ENCODE measurements at regions of chr17 and their contacts with region 1.

Region 1: GRCh38 chr17:30074730-30075129 is 41.9 kb upstream of the NSRP1 start:
- DNase-seq: peak; percentile 21
- ATAC-seq: no peak
- H3K4me3 ChIP-seq: no peak overlapping the region
- H3K27ac ChIP-seq: no peak overlapping the region
- H3K4me1 ChIP-seq: no peaks in the 10 kb centered on the region
- H3K27me3 ChIP-seq: peaks cover 33% of the 10 kb centered on the region
- CTCF ChIP-seq: no peak
- POLR2A ChIP-seq: no peak
- RAD21 ChIP-seq: no peak

Region 2: DNA sequence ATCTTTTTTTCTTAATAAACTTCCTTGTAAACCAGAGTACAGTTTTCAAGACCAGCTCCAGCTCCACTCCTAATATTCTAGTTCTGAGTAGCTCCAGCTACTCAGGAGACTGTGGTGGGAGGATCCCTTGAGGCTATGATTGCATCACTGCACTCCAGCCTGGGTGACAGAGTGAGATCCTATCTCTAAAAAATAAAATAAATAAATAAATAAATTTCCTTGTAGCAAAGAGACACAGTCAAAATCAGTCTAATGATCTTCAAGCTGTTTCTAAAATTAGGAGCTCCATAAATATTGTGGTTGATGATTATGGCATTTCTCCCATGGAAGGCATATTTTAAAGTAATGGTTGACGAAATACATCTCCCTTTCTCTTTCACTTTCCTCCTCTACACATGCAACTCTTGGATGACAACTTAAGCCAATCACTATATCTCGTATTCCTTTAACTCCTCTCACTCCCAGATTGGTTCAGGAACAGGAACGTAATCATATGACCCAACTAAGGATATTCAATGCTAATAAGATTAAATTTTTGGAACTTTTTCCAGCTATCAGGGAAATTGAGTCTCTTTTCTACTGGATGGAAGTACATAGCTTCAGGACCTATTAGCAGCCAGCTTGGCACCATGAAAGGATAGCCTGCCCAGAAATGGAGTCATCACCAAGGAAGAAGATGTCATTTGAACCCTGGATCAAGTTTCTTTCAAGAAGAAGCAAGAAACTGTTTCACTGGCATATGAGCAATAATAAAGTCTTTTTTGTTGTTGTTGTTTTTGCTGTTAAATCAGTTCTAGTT is 726.7 kb before region 1 on chr17:
- CTCF ChIA-PET with region 1: no interaction called
- POLR2A ChIA-PET with region 1: no interaction called
- dilution Hi-C with region 1: no loop called
- in situ Hi-C with region 1: loop called (anchors 25 kb)
- intact Hi-C with region 1: no loop called
- DNase-seq: no peak
- ATAC-seq: no peak; the same call in 1 of the 2 replicates
- H3K4me3 ChIP-seq: no peak overlapping the region
- H3K27ac ChIP-seq: no peak overlapping the region
- H3K4me1 ChIP-seq: no peaks in the 10 kb centered on the region
- H3K27me3 ChIP-seq: peaks cover 6% of the 10 kb centered on the region
- CTCF ChIP-seq: no peak
- POLR2A ChIP-seq: no peak
- RAD21 ChIP-seq: no peak

Region 3: DNA sequence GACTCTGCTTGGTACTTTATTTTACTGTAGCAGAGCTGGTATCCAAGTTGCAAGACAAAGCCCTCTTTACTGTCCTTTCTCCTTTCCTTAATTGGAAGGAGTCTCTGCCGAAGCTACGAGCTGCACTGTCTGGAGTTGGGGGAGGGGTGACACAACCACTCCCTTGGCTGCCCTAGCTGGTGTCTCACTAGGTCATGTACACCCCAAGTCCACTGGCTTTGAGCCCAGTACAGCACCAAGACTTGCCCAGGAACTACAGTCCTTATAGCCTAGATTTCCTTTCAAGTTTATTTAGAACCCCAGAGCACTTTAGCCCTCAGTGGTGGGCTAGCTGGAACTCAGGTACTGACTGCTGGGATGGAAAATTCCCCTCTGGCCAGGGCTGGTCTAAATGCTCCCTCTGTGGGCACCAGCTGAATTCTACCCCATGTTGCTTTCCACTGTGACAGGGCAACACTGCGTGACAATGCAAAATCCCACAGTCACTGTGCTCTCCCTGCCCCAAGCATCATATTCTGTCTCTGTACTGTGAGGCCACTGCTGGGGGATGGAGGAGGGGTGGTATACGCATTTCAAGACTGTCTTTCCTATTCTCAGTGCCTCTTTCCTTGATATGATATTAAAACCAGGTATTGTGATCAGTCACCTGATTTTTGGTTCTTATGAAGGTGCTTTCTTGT is 114.9 kb before region 1 on chr17:
- CTCF ChIA-PET with region 1: no interaction called
- POLR2A ChIA-PET with region 1: no interaction called
- dilution Hi-C with region 1: no loop called
- in situ Hi-C with region 1: loop called (anchors 10 kb)
- intact Hi-C with region 1: loop called (anchors 10 kb)
- DNase-seq: peak; percentile 1
- ATAC-seq: no peak
- H3K4me3 ChIP-seq: no peak overlapping the region
- H3K27ac ChIP-seq: no peak overlapping the region
- H3K4me1 ChIP-seq: peaks cover 3% of the 10 kb centered on the region; the same call in 1 of the 2 replicates
- H3K27me3 ChIP-seq: peaks cover 2% of the 10 kb centered on the region; the same call in 1 of the 2 replicates
- CTCF ChIP-seq: no peak
- POLR2A ChIP-seq: no peak
- RAD21 ChIP-seq: no peak

Region 4: DNA sequence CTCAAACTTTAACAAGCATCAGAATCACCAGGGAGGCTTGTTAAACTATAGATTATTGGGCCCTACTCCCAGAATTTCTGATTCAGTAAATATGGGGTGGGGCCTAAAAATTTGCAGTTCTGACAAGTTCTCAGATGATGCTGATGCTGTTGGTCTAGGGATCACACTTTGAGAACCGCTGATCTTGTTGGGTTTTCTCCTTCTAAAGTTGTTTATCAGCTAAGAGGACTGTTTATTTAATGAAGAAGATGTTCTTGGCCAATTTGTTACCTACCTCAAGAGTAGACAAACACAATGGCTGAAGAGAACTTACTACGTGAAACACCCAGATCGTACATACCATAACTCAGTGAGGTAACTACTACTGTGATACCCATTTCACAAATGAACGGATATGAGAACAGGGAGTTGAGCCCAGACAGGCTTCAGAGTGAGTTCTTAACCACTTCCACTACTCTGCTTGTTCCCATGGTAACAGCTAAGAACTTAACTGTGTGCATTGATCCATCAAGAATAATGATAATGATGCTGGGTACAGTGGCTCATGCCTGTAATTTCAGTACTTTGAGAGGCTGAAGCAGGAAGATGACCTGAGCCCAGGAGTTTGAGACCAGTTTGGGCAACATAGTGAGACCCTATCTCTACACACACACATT is 43.4 kb before region 1 on chr17:
- CTCF ChIA-PET with region 1: no interaction called
- POLR2A ChIA-PET with region 1: no interaction called
- dilution Hi-C with region 1: no loop called
- in situ Hi-C with region 1: loop called (anchors 5 kb)
- intact Hi-C with region 1: loop called (anchors 5 kb)
- DNase-seq: no peak
- ATAC-seq: no peak
- H3K4me3 ChIP-seq: no peak overlapping the region
- H3K27ac ChIP-seq: no peak overlapping the region
- H3K4me1 ChIP-seq: no peaks in the 10 kb centered on the region
- H3K27me3 ChIP-seq: peaks cover 8% of the 10 kb centered on the region
- CTCF ChIP-seq: no peak
- POLR2A ChIP-seq: no peak
- RAD21 ChIP-seq: no peak